ENCODE measurements at regions of chr17 and their contacts with region 1.

Region 1: GRCh38 chr17:80826955-80827645 is 164.5 kb upstream of the CHMP6 start:
- DNase-seq: peak; percentile 97
- H3K4me3 Mint-ChIP-seq: peak overlapping the region; percentile 60
- H3K27ac Mint-ChIP-seq: peak overlapping the region; percentile 87
- H3K4me1 Mint-ChIP-seq: peaks cover 27% of the 10 kb centered on the region
- H3K27me3 Mint-ChIP-seq: no peaks in the 10 kb centered on the region
- CTCF ChIP-seq: no peak

Region 2: GRCh38 chr17:80877729-80878303 is 50.7 kb after region 1 on chr17:
- CTCF ChIA-PET with region 1: no interaction called
- POLR2A ChIA-PET with region 1: no interaction called
- intact Hi-C with region 1: no loop called
- DNase-seq: no peak
- H3K4me3 Mint-ChIP-seq: no peak overlapping the region
- H3K27ac Mint-ChIP-seq: no peak overlapping the region
- H3K4me1 Mint-ChIP-seq: peaks cover 9% of the 10 kb centered on the region
- H3K27me3 Mint-ChIP-seq: no peaks in the 10 kb centered on the region
- CTCF ChIP-seq: no peak

Region 3: GRCh38 chr17:80899402-80900268 is 72.5 kb after region 1 on chr17:
- CTCF ChIA-PET with region 1: interaction called, 12 read pairs
- POLR2A ChIA-PET with region 1: interaction called, 4 read pairs
- intact Hi-C with region 1: no loop called
- DNase-seq: peak; percentile 85
- H3K4me3 Mint-ChIP-seq: peak overlapping the region; percentile 12
- H3K27ac Mint-ChIP-seq: peak overlapping the region; percentile 39
- H3K4me1 Mint-ChIP-seq: peaks cover 36% of the 10 kb centered on the region
- H3K27me3 Mint-ChIP-seq: no peaks in the 10 kb centered on the region
- CTCF ChIP-seq: peak; percentile 88

Measured in MCF 10A (cell line).